ENCODE measurements at regions of chr7 and their contacts with region 1.

Region 1: DNA sequence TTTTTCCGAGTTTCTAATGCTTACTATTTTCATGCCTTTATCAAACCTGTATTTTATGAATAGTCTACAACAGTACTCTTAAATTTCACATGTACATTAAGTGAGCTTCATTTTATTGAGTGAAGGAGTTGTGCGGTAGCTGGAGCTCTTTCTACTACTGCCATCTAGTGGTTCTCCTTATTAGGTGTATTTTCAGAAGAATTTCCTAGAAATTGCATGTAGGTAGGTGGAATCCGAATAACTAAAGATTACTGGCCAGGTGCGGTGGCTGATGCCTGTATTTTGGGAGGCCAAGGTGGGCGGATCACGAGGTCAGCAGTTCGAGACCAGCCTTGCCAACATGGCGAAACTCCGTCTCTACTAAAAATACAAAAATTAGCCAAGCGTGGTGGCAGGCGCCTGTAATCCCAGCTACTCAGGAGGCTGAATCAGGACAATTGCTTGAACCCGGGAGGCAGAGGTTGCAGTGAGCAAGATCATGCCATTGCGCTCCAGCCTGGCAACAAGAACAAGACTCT is 38.3 kb downstream of the LRRC72 start:
- DNase-seq: no peak
- ATAC-seq: peak; percentile 53
- H3K4me3 Mint-ChIP-seq: no peak overlapping the region
- H3K27ac Mint-ChIP-seq: no peak overlapping the region
- H3K4me1 Mint-ChIP-seq: peaks cover 23% of the 10 kb centered on the region
- H3K27me3 Mint-ChIP-seq: no peaks in the 10 kb centered on the region
- CTCF ChIP-seq: peak; percentile 64

Region 2: GRCh38 chr7:14691597-14692203 is 1873.3 kb before region 1 on chr7:
- CTCF ChIA-PET with region 1: no interaction called
- POLR2A ChIA-PET with region 1: no interaction called
- intact Hi-C with region 1: loop called (anchors 10 kb)
- DNase-seq: no peak
- ATAC-seq: peak; percentile 64
- H3K4me3 Mint-ChIP-seq: no peak overlapping the region
- H3K27ac Mint-ChIP-seq: no peak overlapping the region
- H3K4me1 Mint-ChIP-seq: no peaks in the 10 kb centered on the region
- H3K27me3 Mint-ChIP-seq: no peaks in the 10 kb centered on the region
- CTCF ChIP-seq: peak; percentile 53

Region 3: DNA sequence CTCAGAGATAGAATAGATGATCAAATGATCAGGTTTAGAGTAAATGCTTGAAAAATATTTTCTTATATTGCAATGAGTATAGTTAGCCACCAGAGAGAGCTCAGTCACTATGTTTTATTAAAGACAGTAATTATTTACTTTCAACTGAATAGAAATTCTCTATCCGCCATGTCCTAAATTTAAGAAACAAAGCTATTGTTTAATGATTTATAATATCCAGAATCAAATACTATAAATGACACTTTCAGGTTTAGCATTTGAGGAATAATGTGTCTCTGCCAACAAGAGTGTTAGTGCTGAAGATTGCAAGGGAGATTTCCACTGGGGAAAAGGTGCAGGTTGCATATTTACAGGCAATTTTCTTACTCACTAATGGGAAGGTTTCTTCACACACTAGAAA is 1847.2 kb before region 1 on chr7:
- CTCF ChIA-PET with region 1: no interaction called
- POLR2A ChIA-PET with region 1: no interaction called
- intact Hi-C with region 1: loop called (anchors 5 kb)
- DNase-seq: no peak
- ATAC-seq: no peak
- H3K4me3 Mint-ChIP-seq: no peak overlapping the region
- H3K27ac Mint-ChIP-seq: no peak overlapping the region
- H3K4me1 Mint-ChIP-seq: no peaks in the 10 kb centered on the region
- H3K27me3 Mint-ChIP-seq: no peaks in the 10 kb centered on the region
- CTCF ChIP-seq: no peak

Region 4: GRCh38 chr7:15199482-15199881 is 1365.5 kb before region 1 on chr7:
- CTCF ChIA-PET with region 1: no interaction called
- POLR2A ChIA-PET with region 1: no interaction called
- intact Hi-C with region 1: loop called (anchors 10 kb)
- DNase-seq: no peak
- ATAC-seq: no peak
- H3K4me3 Mint-ChIP-seq: no peak overlapping the region
- H3K27ac Mint-ChIP-seq: no peak overlapping the region
- H3K4me1 Mint-ChIP-seq: no peaks in the 10 kb centered on the region
- H3K27me3 Mint-ChIP-seq: no peaks in the 10 kb centered on the region
- CTCF ChIP-seq: no peak

Region 5: GRCh38 chr7:16078076-16078952 is 486.7 kb before region 1 on chr7:
- CTCF ChIA-PET with region 1: interaction called, 15 read pairs
- POLR2A ChIA-PET with region 1: no interaction called
- intact Hi-C with region 1: loop called (anchors 1 kb)
- DNase-seq: no peak
- ATAC-seq: no peak
- H3K4me3 Mint-ChIP-seq: no peak overlapping the region
- H3K27ac Mint-ChIP-seq: no peak overlapping the region
- H3K4me1 Mint-ChIP-seq: no peaks in the 10 kb centered on the region
- H3K27me3 Mint-ChIP-seq: no peaks in the 10 kb centered on the region
- CTCF ChIP-seq: no peak

Region 6: DNA sequence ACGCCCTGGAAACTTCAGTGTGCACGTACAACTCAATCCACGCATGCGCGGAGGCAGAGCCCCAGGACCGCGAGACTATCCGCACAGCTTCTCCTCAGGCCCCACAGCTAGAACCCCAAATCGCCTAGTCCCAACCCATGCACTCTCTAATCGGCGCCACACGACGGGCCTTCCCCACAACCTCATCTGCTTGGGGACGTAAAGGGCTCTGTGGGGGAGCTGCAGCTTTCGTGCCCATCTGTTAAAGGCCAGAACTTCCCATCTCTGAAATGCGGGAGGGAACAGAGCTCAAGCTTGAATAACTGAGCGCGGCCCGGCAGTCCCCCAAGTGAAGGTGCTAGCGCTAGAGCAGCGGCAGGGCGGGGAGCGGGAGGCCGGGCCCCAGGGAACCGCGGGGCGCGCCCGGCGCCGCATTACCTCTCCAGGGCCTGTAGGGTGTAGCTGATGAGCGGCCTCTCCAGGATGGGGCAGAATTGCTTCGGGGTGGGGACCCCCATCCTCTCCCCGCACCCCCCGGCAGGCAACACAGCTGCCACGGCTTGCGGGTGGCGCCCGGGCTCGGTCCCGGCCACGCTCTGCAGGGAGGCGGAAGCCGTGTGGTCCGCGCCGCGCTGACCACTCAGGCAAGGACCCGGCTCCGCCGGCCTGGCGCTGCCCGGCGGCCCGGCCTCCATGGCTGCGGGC is 144.2 kb before region 1 on chr7:
- CTCF ChIA-PET with region 1: interaction called, 10 read pairs
- POLR2A ChIA-PET with region 1: interaction called, 3 read pairs
- intact Hi-C with region 1: no loop called
- DNase-seq: peak; percentile 73
- ATAC-seq: peak; percentile 90
- H3K4me3 Mint-ChIP-seq: peak overlapping the region; percentile 93
- H3K27ac Mint-ChIP-seq: peak overlapping the region; percentile 95
- H3K4me1 Mint-ChIP-seq: peaks cover 22% of the 10 kb centered on the region
- H3K27me3 Mint-ChIP-seq: no peaks in the 10 kb centered on the region
- CTCF ChIP-seq: no peak

Region 7: DNA sequence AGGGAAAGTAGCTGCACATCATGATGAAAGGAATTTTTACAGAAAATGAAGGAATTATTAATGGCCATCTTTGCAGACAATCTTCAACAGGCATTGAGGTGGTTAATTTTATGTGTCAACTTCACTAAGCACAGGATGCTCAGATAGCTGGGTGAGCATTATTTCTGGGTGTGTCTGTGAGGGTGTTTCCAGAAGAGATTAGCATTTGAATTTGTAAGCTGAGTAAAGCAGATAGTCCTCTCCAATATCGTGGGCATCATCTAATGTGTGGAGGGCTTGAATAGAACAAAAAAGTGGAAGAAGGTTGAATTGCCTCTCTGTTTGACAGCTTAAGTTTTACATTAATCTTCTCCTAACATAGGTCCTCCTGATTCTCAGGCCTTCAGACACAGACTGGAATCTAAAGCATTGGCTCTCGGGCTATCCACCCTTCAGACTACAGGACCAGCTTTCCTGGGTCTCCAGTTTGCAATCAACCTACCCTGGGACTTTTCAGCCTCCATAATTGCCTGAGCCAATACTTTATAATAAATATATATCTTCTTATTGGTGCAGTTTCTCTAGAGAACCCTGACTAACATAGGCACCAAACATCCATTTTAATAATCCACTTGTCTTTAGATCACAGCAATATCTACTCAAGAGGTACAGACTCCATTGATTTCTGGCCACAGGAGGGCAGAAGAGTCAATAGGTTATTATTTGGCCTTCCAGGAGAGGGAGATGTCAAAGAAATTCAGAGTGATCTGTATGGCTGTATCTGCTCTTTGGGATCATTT is 133.1 kb before region 1 on chr7:
- CTCF ChIA-PET with region 1: interaction called, 62 read pairs
- POLR2A ChIA-PET with region 1: no interaction called
- intact Hi-C with region 1: loop called (anchors 1 kb)
- DNase-seq: no peak
- ATAC-seq: peak; percentile 56
- H3K4me3 Mint-ChIP-seq: no peak overlapping the region
- H3K27ac Mint-ChIP-seq: no peak overlapping the region
- H3K4me1 Mint-ChIP-seq: no peaks in the 10 kb centered on the region
- H3K27me3 Mint-ChIP-seq: peaks cover 4% of the 10 kb centered on the region
- CTCF ChIP-seq: no peak